CD14-positive monocyte (primary cell): ENCODE measurements at regions of chr3 and their contacts with region 1.

Region 1: GRCh38 chr3:102024270-102024904 is 175.1 kb downstream of the NFKBIZ start:
- DNase-seq: peak in 1 of 3 donors; percentile 27
- H3K4me3 ChIP-seq: no peak overlapping the region
- H3K4me3 Mint-ChIP-seq: no peak overlapping the region
- H3K27ac ChIP-seq: no peak overlapping the region
- H3K27ac Mint-ChIP-seq: no peak overlapping the region
- H3K4me1 ChIP-seq: peaks cover 41 to 61% of the 10 kb centered on the region in 2 donors
- H3K4me1 Mint-ChIP-seq: peaks cover 43% of the 10 kb centered on the region
- H3K27me3 ChIP-seq: no peaks in the 10 kb centered on the region
- H3K27me3 Mint-ChIP-seq: peaks cover 0 to 1% (median 0%) of the 10 kb centered on the region in 3 donors
- CTCF ChIP-seq: no peak

Region 2: DNA sequence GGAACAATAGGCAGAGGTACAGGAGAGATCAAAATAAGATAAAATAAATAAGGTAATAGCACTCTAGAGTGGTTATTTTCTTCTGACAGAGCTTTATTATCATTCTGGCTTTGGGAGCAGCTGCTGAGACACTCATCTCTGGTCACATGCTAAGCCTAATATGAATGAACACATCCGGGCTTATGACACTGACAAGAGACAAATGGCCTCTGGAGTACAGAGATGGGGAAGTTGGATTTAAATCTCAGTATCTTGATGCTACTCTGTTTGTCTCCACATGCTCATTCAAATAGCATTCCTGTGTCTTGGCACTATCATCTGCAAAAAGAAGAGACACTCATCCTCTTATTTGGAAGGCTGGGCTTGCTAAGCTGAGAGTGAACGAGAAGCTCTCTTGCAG is 1476.3 kb before region 1 on chr3:
- intact Hi-C with region 1: no loop called
- DNase-seq: no peak
- H3K4me3 ChIP-seq: no peak overlapping the region
- H3K4me3 Mint-ChIP-seq: no peak overlapping the region
- H3K27ac ChIP-seq: no peak overlapping the region
- H3K27ac Mint-ChIP-seq: no peak overlapping the region
- H3K4me1 ChIP-seq: no peaks in the 10 kb centered on the region
- H3K4me1 Mint-ChIP-seq: peaks cover 6% of the 10 kb centered on the region
- H3K27me3 ChIP-seq: no peaks in the 10 kb centered on the region
- H3K27me3 Mint-ChIP-seq: peaks cover 0 to 2% (median 0%) of the 10 kb centered on the region in 3 donors
- CTCF ChIP-seq: no peak

Region 3: GRCh38 chr3:101849051-101849720 is 175.2 kb before region 1 on chr3 and contains the start of gene NFKBIZ:
- intact Hi-C with region 1: loop called in 1 of 2 experiments (anchors 10 kb)
- DNase-seq: peak; percentile 92 to 97 (median 95)
- H3K4me3 ChIP-seq: peak within 1 kb of the TSS; percentile 61 to 100 (median 98)
- H3K4me3 Mint-ChIP-seq: peak within 1 kb of the TSS; percentile 96
- H3K27ac ChIP-seq: peak within 1 kb of the TSS; percentile 85 to 96
- H3K27ac Mint-ChIP-seq: peak within 1 kb of the TSS; percentile 94 to 99 (median 98)
- H3K4me1 ChIP-seq: peaks cover 41 to 56% of the 10 kb centered on the region in 2 donors
- H3K4me1 Mint-ChIP-seq: peaks cover 52% of the 10 kb centered on the region
- H3K27me3 ChIP-seq: no peaks in the 10 kb centered on the region
- H3K27me3 Mint-ChIP-seq: no peaks in the 10 kb centered on the region
- CTCF ChIP-seq: no peak
- polyA plus RNA-seq, gene NFKBIZ: 71.0 to 592 (median 84.9) TPM

Region 4: DNA sequence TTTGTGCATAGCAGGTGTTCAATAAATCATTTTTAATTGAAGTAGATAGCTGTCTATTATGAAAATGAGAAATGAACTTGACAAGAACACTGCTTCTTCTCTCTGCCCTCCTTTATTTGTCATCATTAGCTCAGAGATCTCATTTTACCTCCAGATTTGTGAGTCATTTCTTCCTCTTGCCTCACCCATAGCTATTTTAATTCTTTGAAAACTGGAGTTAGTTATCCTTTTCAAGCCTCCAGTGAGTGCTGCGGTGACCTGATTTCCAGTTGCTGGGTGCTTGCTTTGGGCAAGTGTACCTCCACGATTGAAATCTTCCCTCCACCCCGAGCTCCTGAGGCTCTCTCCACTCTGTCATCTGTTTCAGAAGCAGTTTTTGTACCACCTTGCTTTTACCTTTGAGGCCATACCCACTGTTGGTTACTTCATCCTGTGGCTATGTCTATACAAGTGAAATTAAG is 60.5 kb before region 1 on chr3:
- intact Hi-C with region 1: loop called in 1 of 2 experiments (anchors 10 kb)
- DNase-seq: peak; percentile 48 to 76 (median 67)
- H3K4me3 ChIP-seq: no peak overlapping the region
- H3K4me3 Mint-ChIP-seq: peak overlapping the region in 1 of 2 donors; percentile 12
- H3K27ac ChIP-seq: peak overlapping the region in 1 of 2 donors; percentile 42
- H3K27ac Mint-ChIP-seq: peak overlapping the region; percentile 15 to 94 (median 62)
- H3K4me1 ChIP-seq: peaks cover 26 to 31% of the 10 kb centered on the region in 2 donors
- H3K4me1 Mint-ChIP-seq: peaks cover 31% of the 10 kb centered on the region
- H3K27me3 ChIP-seq: no peaks in the 10 kb centered on the region
- H3K27me3 Mint-ChIP-seq: no peaks in the 10 kb centered on the region
- CTCF ChIP-seq: no peak

Region 5: DNA sequence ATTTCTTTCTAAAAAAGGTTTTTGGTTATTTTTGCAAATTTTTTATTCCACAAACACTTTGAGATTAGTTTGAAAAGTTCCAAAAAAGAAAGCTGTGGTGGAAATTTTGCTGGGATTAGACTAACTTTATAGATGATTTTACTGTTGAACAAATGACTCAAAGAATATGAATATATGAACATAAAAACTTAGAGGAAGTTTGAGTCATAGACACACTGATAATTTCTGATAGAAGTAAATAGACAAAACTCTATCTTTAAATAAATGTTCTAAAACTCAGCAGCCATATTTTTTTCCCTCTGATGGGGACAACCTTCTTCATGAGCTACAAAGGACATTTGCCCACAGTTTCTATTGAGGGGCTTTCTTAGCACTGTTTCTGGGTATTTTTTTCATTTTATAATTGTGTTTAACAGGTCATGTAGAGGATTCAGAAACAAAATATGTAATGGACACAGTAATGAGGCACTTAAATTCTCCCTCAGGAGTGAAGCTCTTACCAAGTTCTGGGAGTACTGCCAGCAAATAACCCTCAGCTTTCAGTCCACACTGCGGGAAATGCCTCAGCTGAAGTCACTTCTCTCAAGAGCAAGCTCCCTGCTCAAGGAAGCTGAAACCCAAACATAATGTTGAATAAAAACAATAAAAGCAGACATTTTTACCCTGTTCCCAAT is 17.4 kb before region 1 on chr3:
- intact Hi-C with region 1: no loop called
- DNase-seq: no peak
- H3K4me3 ChIP-seq: no peak overlapping the region
- H3K4me3 Mint-ChIP-seq: no peak overlapping the region
- H3K27ac ChIP-seq: no peak overlapping the region
- H3K27ac Mint-ChIP-seq: no peak overlapping the region
- H3K4me1 ChIP-seq: no peaks in the 10 kb centered on the region
- H3K4me1 Mint-ChIP-seq: peaks cover 1% of the 10 kb centered on the region
- H3K27me3 ChIP-seq: no peaks in the 10 kb centered on the region
- H3K27me3 Mint-ChIP-seq: no peaks in the 10 kb centered on the region
- CTCF ChIP-seq: no peak